ENCODE measurements at regions of chr10 and their contacts with region 1.

Region 1: GRCh38 chr10:77846718-77847630 is 79.6 kb downstream of the DLG5 start:
- DNase-seq: no peak
- ATAC-seq: peak; percentile 91
- H3K4me3 ChIP-seq: no peak overlapping the region
- H3K27ac ChIP-seq: no peak overlapping the region
- H3K4me1 ChIP-seq: peaks cover 9% of the 10 kb centered on the region
- H3K27me3 ChIP-seq: no peaks in the 10 kb centered on the region
- CTCF ChIP-seq: peak; percentile 93 to 96 (median 95)
- EP300 ChIP-seq: no peak
- POLR2A ChIP-seq: no peak
- RAD21 ChIP-seq: peak; percentile 76

Region 2: GRCh38 chr10:77862595-77862994 is 15.6 kb after region 1 on chr10:
- CTCF ChIA-PET with region 1: interaction called, 10 read pairs
- POLR2A ChIA-PET with region 1: no interaction called
- RAD21 ChIA-PET with region 1: no interaction called
- SMC1A ChIA-PET with region 1: interaction called, 5 read pairs
- in situ Hi-C with region 1: no loop called
- intact Hi-C with region 1: no loop called
- DNase-seq: no peak
- ATAC-seq: no peak
- H3K4me3 ChIP-seq: no peak overlapping the region
- H3K27ac ChIP-seq: no peak overlapping the region
- H3K4me1 ChIP-seq: no peaks in the 10 kb centered on the region
- H3K27me3 ChIP-seq: no peaks in the 10 kb centered on the region
- CTCF ChIP-seq: no peak
- EP300 ChIP-seq: no peak
- POLR2A ChIP-seq: no peak
- RAD21 ChIP-seq: no peak

Region 3: DNA sequence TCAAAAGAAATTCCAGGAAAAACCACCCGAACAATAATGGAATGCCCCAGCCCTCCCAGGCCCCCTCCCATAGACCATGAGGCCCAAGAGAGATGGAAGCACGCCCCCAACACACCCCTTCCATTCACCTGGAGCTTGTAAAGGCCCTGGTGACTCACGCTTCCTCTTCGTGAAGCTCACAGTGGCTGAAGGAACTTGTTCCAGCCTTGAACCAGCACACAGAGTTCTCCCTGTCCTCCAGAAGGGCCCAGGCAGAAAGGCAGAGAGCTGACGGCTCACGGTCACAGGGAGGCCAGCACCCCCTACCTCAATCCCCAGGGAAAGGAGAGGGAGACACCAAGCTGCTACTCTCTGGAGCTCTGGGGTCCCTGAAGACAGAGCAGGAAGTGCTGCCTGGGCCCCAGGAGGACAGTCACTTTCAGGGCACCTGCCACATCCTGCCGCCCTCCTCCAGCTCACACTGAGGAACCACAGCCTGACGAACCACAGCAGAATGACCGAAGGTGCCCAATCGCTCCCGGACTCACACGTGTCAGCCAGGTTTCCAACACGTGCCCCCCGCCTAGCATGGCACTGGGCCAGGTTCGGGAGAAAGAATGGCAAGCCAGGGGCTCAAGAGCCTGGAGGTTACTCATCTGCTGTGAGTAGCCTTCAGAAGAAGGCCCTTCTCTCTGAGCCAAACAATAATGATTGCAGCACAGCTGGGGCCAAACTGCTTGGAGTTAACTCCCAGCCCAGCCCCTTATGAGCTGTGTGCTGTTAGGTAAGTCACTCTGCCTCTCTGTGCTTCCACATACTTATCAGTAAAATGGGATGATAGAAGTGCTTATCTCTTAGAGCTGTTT is 26.8 kb after region 1 on chr10:
- CTCF ChIA-PET with region 1: interaction called, 14 read pairs
- POLR2A ChIA-PET with region 1: no interaction called
- RAD21 ChIA-PET with region 1: interaction called, 7 read pairs
- SMC1A ChIA-PET with region 1: interaction called, 10 read pairs
- in situ Hi-C with region 1: no loop called
- intact Hi-C with region 1: no loop called
- DNase-seq: peak; percentile 64
- ATAC-seq: peak; percentile 86
- H3K4me3 ChIP-seq: no peak overlapping the region
- H3K27ac ChIP-seq: peak overlapping the region; percentile 88
- H3K4me1 ChIP-seq: peaks cover 27% of the 10 kb centered on the region
- H3K27me3 ChIP-seq: no peaks in the 10 kb centered on the region
- CTCF ChIP-seq: no peak
- EP300 ChIP-seq: 0 out of 4 replicates have a peak, but pooled peaks of 1 of the 2 experiments have one; percentile 25
- POLR2A ChIP-seq: peak; percentile 62
- RAD21 ChIP-seq: no peak

Region 4: DNA sequence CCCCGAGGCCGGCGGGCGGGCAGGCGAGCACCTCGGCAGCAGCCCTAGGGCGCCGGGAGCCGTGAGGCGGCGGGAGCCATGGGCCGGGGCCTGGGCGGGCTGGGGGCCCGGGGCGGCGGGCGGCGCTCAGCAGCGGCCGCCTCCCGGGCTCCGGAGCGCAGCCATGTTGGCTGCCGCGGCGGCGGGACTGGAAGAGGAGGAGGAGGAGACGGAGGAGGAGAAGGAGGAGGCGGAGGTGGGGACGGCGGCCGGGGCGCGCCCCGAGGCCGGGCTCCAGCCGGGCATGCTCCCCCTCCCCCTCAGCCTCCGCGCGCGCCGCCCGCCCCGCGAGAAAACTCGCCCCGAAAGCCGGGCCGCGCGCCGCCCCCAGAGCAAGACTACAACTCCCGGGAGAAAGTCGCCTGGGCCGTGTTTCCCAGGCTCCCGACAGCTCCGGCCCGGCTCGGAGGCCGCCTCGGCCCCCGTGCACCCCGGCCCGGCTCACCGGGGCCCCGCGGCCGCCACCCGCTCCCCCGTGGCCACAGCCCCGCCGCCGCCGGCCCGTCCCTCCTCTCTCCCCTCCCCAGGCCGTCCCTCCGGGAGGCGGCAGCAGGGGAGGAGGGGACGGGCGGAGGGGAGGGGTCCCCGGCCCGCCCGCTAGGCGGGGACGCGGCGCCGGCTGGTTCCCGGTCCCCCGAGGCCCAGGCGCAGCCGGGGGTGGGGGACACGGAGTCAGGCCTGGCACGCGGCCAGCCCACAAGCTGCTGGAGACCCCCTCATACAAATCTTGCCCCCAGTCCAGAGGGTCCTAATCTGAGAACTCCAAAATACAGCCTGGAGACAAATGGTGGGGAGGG is 79.8 kb after region 1 on chr10 and contains the start of gene DLG5:
- CTCF ChIA-PET with region 1: interaction called, 7 read pairs
- POLR2A ChIA-PET with region 1: no interaction called
- RAD21 ChIA-PET with region 1: no interaction called
- SMC1A ChIA-PET with region 1: interaction called, 3 read pairs
- in situ Hi-C with region 1: no loop called
- intact Hi-C with region 1: loop called (anchors 5 kb)
- DNase-seq: no peak
- ATAC-seq: peak; percentile 74
- H3K4me3 ChIP-seq: peak within 1 kb of the TSS; percentile 77
- H3K27ac ChIP-seq: no peak within 1 kb of the TSS
- H3K4me1 ChIP-seq: peaks cover 12% of the 10 kb centered on the region
- H3K27me3 ChIP-seq: peaks cover 6 to 12% of the 10 kb centered on the region in 2 experiments
- CTCF ChIP-seq: no peak
- EP300 ChIP-seq: no peak
- POLR2A ChIP-seq: peak; percentile 55; the same call in 1 of the 2 replicates
- RAD21 ChIP-seq: no peak
- polyA plus RNA-seq, gene DLG5: 0.18 to 0.22 TPM

Region 5: GRCh38 chr10:77970869-77971803 is 124.2 kb after region 1 on chr10:
- CTCF ChIA-PET with region 1: interaction called, 12 read pairs
- POLR2A ChIA-PET with region 1: no interaction called
- RAD21 ChIA-PET with region 1: interaction called, 3 read pairs
- SMC1A ChIA-PET with region 1: no interaction called
- in situ Hi-C with region 1: no loop called
- intact Hi-C with region 1: loop called (anchors 5 kb)
- DNase-seq: no peak
- ATAC-seq: peak; percentile 38; the same call in 2 of the 3 replicates
- H3K4me3 ChIP-seq: no peak overlapping the region
- H3K27ac ChIP-seq: peak overlapping the region; percentile 30
- H3K4me1 ChIP-seq: 0 out of 2 replicates have a peak, but pooled peaks cover 5% of the 10 kb centered on the region
- H3K27me3 ChIP-seq: no peaks in the 10 kb centered on the region
- CTCF ChIP-seq: no peak
- EP300 ChIP-seq: no peak
- POLR2A ChIP-seq: no peak
- RAD21 ChIP-seq: no peak

Region 6: GRCh38 chr10:77989081-77989724 is 142.2 kb after region 1 on chr10:
- CTCF ChIA-PET with region 1: no interaction called
- POLR2A ChIA-PET with region 1: no interaction called
- RAD21 ChIA-PET with region 1: no interaction called
- SMC1A ChIA-PET with region 1: no interaction called
- in situ Hi-C with region 1: no loop called
- intact Hi-C with region 1: no loop called
- DNase-seq: no peak
- ATAC-seq: no peak
- H3K4me3 ChIP-seq: no peak overlapping the region
- H3K27ac ChIP-seq: no peak overlapping the region
- H3K4me1 ChIP-seq: no peaks in the 10 kb centered on the region
- H3K27me3 ChIP-seq: no peaks in the 10 kb centered on the region
- CTCF ChIP-seq: no peak
- EP300 ChIP-seq: no peak
- POLR2A ChIP-seq: no peak
- RAD21 ChIP-seq: no peak

Region 7: DNA sequence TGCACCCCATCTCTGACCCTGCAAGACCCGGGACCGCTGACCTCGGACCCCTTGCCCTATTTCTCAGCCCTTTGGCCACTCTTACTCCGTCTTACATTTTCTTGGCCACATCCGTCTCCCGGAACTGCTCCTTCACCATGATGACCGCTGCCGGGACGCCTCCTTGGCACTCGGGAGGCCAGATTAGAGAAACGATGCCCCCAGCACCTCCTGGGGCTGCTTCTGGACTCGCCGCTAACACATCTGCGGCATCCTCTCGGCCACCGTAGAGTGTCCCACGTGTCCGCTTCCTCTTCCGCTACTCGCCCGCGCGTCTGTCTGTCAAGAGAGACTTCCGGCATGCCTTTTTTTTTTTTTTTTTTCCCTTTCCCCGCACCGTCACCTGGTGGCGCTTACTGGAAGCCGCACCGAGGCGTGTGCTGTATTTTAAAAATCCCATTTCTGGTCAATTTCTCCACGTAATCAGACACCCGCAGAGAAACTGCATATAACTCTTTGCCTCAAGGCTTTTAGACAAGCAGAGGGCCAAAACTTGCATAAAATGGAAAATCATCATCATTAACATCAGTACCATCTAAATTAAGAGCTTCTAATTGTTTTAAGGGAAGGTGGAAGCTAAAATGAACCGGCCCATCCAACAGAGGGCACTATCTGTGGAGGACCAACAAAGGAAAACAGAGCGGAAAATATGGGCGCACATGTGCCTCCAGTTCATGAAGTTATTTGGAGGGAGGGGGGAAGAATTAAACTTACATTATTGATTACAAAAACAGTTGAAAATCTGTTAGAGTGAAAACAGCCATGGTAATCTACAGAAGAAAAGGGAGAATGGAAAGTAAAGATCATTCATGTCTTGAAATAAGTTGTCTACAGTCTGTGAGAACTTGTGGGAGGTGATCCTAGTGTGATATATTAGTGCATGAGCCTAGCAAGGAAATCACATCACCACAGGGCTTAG is 182.6 kb after region 1 on chr10 and contains the start of gene POLR3A:
- CTCF ChIA-PET with region 1: interaction called, 16 read pairs
- POLR2A ChIA-PET with region 1: no interaction called
- RAD21 ChIA-PET with region 1: no interaction called
- SMC1A ChIA-PET with region 1: interaction called, 7 read pairs
- in situ Hi-C with region 1: no loop called
- intact Hi-C with region 1: loop called (anchors 5 kb)
- DNase-seq: peak; percentile 82
- ATAC-seq: peak; percentile 74
- H3K4me3 ChIP-seq: peak within 1 kb of the TSS; percentile 97
- H3K27ac ChIP-seq: peak within 1 kb of the TSS; percentile 92
- H3K4me1 ChIP-seq: peaks cover 9% of the 10 kb centered on the region; the same call in 1 of the 2 replicates
- H3K27me3 ChIP-seq: no peaks in the 10 kb centered on the region
- CTCF ChIP-seq: peak; percentile 59 to 78 (median 74)
- EP300 ChIP-seq: no peak
- POLR2A ChIP-seq: peak; percentile 82
- RAD21 ChIP-seq: peak; percentile 57
- polyA plus RNA-seq, gene POLR3A: 5.4 to 6.6 TPM

Measured in GM12878 (cell line).